Activated CD4-positive, alpha-beta memory T cell treated with anti-CD3 and anti-CD28 coated beads for 36 hours (primary cell): ENCODE measurements at regions of chr6 and their contacts with region 1.

Region 1: GRCh38 chr6:46011241-46012085 is 4.2 kb downstream of the CLIC5 start:
- DNase-seq: peak; percentile 80
- H3K4me3 Mint-ChIP-seq: peak overlapping the region; percentile 39
- H3K27ac Mint-ChIP-seq: peak overlapping the region; percentile 77
- H3K4me1 Mint-ChIP-seq: peaks cover 58% of the 10 kb centered on the region
- H3K27me3 Mint-ChIP-seq: peaks cover 1% of the 10 kb centered on the region

Region 2: GRCh38 chr6:44642870-44643529 is 1368.5 kb before region 1 on chr6:
- CTCF ChIA-PET with region 1: no interaction called
- POLR2A ChIA-PET with region 1: interaction called, 3 read pairs
- intact Hi-C with region 1: loop called (anchors 5 kb)
- DNase-seq: peak; percentile 88
- H3K4me3 Mint-ChIP-seq: peak overlapping the region; percentile 33
- H3K27ac Mint-ChIP-seq: peak overlapping the region; percentile 96
- H3K4me1 Mint-ChIP-seq: peaks cover 39% of the 10 kb centered on the region
- H3K27me3 Mint-ChIP-seq: no peaks in the 10 kb centered on the region

Region 3: DNA sequence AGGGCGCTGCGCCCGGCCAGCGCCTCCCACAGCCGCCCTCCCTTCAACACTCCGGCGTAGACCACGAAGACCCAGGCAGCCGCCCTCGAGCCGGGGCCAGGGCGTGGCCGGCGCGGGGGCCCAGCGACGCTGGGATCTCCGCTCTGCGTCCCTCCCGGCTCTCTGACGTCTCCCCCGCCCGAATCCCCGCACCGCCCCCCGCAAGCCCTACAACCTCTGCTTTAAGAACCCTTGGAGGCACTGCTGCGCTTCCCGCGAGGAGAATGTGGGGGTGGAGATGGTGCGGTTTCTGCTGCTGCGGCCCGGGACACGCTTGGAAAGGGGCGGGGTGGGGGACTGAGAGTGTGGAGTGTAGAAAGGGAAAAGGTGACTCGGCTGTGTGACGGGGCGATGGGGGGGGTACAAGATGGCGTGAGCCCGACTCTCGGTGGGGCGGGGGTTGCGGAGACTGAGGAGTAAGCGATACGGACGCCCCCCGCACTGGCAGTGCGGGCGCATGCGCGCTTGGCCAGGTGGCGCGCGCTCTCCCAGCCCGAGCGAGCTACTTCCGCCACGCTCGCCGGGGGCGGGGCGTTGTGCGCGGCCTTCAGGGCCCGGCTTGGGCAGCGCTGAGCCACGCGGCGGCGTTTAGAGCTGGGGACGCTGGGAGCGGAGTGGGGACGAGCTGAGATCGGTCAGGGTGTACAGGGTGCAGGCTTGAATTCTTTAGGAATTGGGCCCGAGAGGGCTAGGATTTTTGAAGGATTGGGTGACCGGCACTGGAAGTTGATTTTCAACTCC is 633.7 kb before region 1 on chr6 and contains the start of gene SUPT3H:
- CTCF ChIA-PET with region 1: no interaction called
- POLR2A ChIA-PET with region 1: no interaction called
- intact Hi-C with region 1: loop called (anchors 1 kb)
- DNase-seq: peak; percentile 96
- H3K4me3 Mint-ChIP-seq: peak within 1 kb of the TSS; percentile 94
- H3K27ac Mint-ChIP-seq: peak within 1 kb of the TSS; percentile 97
- H3K4me1 Mint-ChIP-seq: peaks cover 27% of the 10 kb centered on the region
- H3K27me3 Mint-ChIP-seq: no peaks in the 10 kb centered on the region
- total RNA-seq, gene SUPT3H: 17.4 to 18.2 TPM

Region 4: DNA sequence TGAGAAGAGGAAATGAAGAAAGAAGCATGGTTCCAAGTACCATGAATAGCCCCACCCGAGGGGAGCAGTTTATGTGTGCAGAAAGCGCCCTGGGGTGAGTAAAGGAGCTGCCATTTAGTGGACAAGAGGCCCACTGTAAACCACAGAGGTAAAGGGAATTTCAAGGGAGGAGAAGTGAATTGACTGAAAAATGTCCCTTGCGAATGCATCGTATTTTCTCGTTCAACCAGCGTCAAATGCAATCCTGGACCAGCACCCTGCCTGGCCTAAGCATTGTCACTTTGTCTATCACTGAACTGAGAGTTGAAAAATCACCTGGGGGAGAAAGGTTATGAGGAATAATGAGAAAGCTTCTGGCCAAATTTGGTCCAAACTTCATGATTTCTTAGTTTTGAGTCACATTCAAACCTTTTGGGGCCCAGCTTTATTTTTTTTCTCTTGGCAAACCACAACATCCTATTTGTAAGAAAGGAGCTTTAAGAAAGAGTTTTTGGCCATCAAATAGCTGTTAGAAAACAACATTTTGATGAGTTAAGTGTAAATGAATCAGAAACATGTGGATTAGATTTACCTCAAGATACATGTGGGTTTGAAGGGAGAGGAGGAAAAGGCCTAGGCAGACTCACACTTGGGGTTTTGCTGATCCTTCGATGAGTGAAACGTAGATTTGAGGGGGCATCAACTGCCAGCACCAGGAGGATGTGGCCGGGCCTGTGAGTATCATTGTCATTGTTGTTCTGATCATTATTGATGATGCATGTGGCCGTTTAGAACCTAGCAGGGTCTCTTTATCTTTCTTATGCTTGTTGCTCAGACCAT is 209.8 kb before region 1 on chr6:
- CTCF ChIA-PET with region 1: no interaction called
- POLR2A ChIA-PET with region 1: no interaction called
- intact Hi-C with region 1: loop called (anchors 5 kb)
- DNase-seq: peak; percentile 84
- H3K4me3 Mint-ChIP-seq: no peak overlapping the region
- H3K27ac Mint-ChIP-seq: no peak overlapping the region
- H3K4me1 Mint-ChIP-seq: no peaks in the 10 kb centered on the region
- H3K27me3 Mint-ChIP-seq: peaks cover 8% of the 10 kb centered on the region

Region 5: DNA sequence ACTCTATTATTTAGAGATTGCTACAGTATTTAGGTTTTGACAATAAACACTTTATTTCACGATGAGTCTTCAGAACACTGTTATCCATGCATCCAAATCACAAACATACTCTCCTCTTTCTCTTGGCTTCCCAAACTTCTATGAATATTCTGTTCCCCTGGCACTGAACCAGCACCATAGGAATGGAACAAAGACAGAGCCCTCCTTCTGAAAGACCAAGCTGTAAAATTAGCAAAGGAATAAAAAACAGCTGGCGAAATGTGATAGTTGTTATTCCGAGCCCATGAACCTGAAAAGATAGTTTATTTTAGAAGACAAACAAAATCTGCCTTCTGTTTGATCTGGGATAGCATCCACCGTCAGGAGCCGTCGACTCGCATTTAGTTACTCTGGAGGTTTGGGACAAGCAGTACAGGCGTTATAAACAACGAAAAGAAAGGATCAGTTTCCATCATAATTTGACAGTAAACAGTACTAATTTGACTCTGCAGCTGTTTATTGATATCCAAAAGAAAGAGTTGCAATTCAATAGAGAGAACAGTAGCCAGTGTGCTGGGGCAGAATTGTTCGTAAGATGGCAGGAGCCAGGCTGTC is 157.2 kb before region 1 on chr6:
- CTCF ChIA-PET with region 1: no interaction called
- POLR2A ChIA-PET with region 1: no interaction called
- intact Hi-C with region 1: no loop called
- DNase-seq: no peak
- H3K4me3 Mint-ChIP-seq: no peak overlapping the region
- H3K27ac Mint-ChIP-seq: no peak overlapping the region
- H3K4me1 Mint-ChIP-seq: no peaks in the 10 kb centered on the region
- H3K27me3 Mint-ChIP-seq: peaks cover 15% of the 10 kb centered on the region

Region 6: DNA sequence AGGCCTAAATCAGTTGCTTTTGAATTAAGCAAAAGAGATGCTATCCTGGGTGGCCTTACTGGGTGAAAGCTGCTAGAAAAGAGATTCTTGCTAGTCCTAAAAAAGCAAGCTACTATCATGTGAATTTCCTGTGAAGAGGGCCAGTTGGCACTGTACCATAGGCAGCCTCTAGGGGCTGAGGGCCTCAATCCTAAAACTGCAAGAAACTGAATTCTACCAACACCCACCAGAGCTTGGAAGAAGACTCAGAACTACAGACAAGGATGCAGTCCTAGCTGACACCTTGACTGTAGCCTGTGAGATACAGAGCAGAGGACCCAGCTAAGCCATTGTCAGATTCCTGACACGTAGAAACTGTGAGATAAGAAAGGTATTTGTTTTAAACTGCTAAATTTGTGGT is 20.3 kb before region 1 on chr6:
- CTCF ChIA-PET with region 1: interaction called, 3 read pairs
- POLR2A ChIA-PET with region 1: no interaction called
- intact Hi-C with region 1: loop called (anchors 1 kb)
- DNase-seq: no peak
- H3K4me3 Mint-ChIP-seq: no peak overlapping the region
- H3K27ac Mint-ChIP-seq: no peak overlapping the region
- H3K4me1 Mint-ChIP-seq: peaks cover 4% of the 10 kb centered on the region
- H3K27me3 Mint-ChIP-seq: no peaks in the 10 kb centered on the region

Region 7: GRCh38 chr6:46062306-46062706 is 50.8 kb after region 1 on chr6:
- CTCF ChIA-PET with region 1: no interaction called
- POLR2A ChIA-PET with region 1: no interaction called
- intact Hi-C with region 1: no loop called
- DNase-seq: no peak
- H3K4me3 Mint-ChIP-seq: no peak overlapping the region
- H3K27ac Mint-ChIP-seq: no peak overlapping the region
- H3K4me1 Mint-ChIP-seq: no peaks in the 10 kb centered on the region
- H3K27me3 Mint-ChIP-seq: peaks cover 14% of the 10 kb centered on the region

Region 8: DNA sequence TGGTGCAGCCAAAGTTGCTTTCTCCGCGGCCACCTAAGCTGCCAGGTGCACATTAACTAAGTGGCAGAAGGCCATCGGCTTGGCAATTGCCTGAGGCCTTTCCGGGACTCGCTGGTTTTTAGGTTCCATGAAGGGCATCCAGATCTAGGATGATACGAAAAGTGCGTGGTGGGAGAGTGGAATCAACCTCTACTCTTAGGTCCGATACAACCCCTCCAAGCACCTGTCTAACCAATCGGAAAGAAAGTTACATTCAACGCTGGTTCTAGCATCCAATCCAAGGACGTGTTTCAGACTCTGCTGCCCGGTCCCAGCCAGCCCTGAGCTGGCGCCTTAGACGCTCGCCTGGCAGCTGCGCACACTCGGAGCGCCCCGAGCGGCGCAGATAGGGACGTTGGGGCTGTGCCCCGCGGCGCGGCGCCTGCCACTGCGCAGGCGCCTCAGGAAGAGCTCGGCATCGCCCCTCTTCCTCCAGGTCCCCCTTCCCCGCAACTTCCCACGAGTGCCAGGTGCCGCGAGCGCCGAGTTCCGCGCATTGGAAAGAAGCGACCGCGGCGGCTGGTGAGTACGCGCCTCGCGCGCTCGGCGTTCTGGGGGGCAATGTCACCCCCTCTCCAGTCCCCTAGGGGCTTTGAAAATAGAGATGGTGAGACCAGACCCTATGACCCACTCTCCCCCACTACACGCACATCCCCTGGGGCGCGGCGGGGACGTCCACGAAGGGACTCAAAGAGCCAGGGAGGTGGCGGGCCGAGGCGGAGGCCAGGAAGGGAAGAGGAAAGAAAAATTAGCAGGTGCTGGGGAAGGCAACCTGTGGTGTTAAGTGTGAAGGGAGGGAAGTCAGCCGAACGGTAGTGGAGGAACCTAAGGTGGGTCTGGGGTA is 118.4 kb after region 1 on chr6 and contains the start of gene ENPP4:
- CTCF ChIA-PET with region 1: no interaction called
- POLR2A ChIA-PET with region 1: no interaction called
- intact Hi-C with region 1: loop called (anchors 1 kb)
- DNase-seq: peak; percentile 94
- H3K4me3 Mint-ChIP-seq: peak within 1 kb of the TSS; percentile 86
- H3K27ac Mint-ChIP-seq: peak within 1 kb of the TSS; percentile 57
- H3K4me1 Mint-ChIP-seq: peaks cover 30% of the 10 kb centered on the region
- H3K27me3 Mint-ChIP-seq: no peaks in the 10 kb centered on the region
- total RNA-seq, gene ENPP4: 8.5 to 8.8 TPM

Region 9: DNA sequence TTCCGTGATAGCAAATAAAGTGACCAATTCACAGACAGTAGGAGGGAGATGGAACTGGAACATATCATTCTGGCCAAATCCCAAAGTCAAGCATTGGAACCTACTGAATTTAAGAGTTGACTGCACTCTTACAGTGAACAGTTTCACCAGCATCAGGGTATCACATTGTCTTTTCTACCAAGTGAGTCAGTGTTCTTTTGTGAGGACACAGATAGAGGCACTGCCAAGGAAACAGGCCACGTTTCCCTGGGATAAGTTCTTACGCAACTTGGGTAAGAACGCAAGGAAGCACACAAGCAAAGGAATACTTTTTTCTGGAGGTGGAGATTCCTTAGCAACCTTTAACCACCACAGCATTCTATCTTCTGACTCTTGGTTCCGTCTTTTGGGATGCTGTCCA is 187.9 kb after region 1 on chr6:
- CTCF ChIA-PET with region 1: no interaction called
- POLR2A ChIA-PET with region 1: no interaction called
- intact Hi-C with region 1: no loop called
- DNase-seq: no peak
- H3K4me3 Mint-ChIP-seq: no peak overlapping the region
- H3K27ac Mint-ChIP-seq: no peak overlapping the region
- H3K4me1 Mint-ChIP-seq: no peaks in the 10 kb centered on the region
- H3K27me3 Mint-ChIP-seq: peaks cover 13% of the 10 kb centered on the region

Region 10: DNA sequence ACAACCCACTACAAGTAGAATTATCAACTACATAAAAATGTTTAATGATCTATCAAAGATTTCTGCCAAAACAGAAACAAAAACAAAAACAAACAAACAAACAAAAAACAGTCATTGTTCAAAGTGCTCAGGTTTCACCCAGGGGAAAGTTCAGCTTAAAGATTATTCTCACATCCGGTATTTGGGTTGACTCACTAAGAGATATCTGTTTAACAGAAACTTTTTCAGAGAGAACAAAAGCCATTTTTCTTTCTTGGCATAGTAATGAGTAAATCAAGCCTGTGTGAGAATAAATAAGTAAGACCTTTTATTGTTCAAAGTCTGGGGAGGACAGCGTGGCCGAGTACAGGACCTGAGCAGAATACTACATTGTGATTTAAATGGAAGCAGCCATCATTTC is 336.2 kb after region 1 on chr6:
- CTCF ChIA-PET with region 1: no interaction called
- POLR2A ChIA-PET with region 1: no interaction called
- intact Hi-C with region 1: no loop called
- DNase-seq: no peak
- H3K4me3 Mint-ChIP-seq: no peak overlapping the region
- H3K27ac Mint-ChIP-seq: no peak overlapping the region
- H3K4me1 Mint-ChIP-seq: no peaks in the 10 kb centered on the region
- H3K27me3 Mint-ChIP-seq: peaks cover 9% of the 10 kb centered on the region